CD8-positive, alpha-beta T cell (primary cell): ENCODE measurements at regions of chr3 and their contacts with region 1.

Region 1: DNA sequence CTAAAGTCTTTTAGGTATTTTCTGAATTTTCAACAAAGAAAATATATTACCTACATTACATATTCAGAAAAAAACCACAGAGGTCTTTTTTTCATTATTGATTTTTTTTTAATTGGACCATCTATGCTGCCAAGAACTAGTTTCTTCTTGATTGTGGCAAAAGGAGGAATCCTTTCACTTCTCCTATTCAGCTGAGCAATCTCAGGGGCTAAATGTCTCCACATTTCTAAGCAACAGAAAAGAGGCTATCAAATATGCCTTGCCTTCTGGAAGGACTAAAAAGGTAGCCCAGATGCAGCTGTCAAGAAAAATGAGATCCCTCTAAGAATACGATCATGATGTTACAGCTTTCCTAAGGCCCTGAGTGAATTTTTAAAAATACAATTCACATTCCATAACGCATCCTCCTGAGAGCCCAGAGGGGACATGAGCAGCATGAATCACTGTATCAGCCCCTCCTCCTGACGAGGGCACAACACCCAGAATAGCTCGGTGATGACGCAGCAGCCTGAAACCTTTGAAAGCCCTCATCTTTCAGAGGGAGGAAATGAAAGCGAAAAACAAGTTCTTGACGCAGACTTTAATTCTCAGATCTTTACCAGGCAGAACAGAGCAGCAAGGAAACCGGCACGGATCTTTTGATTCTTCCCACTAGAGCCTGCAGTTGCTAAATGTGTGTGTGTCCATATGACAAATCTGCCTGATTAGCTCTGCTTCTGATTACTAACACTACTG is 24.6 kb downstream of the RUBCN start:
- DNase-seq: peak; percentile 71 to 98 (median 86)
- ATAC-seq: peak; percentile 98
- H3K4me3 ChIP-seq: peak overlapping the region; percentile 29 to 41
- H3K4me3 Mint-ChIP-seq: peak overlapping the region; percentile 75
- H3K27ac ChIP-seq: peak overlapping the region; percentile 59 to 90
- H3K27ac Mint-ChIP-seq: peak overlapping the region; percentile 94
- H3K4me1 ChIP-seq: peaks cover 14% of the 10 kb centered on the region
- H3K4me1 Mint-ChIP-seq: peaks cover 24% of the 10 kb centered on the region
- H3K27me3 ChIP-seq: no peaks in the 10 kb centered on the region
- H3K27me3 Mint-ChIP-seq: no peaks in the 10 kb centered on the region
- CTCF ChIP-seq: no peak

Region 2: GRCh38 chr3:197700095-197700494 is 12.0 kb before region 1 on chr3:
- CTCF ChIA-PET with region 1: no interaction called
- POLR2A ChIA-PET with region 1: interaction called, 11 read pairs
- intact Hi-C with region 1: no loop called
- DNase-seq: no peak
- ATAC-seq: no peak
- H3K4me3 ChIP-seq: no peak overlapping the region
- H3K4me3 Mint-ChIP-seq: no peak overlapping the region
- H3K27ac ChIP-seq: no peak overlapping the region
- H3K27ac Mint-ChIP-seq: no peak overlapping the region
- H3K4me1 ChIP-seq: no peaks in the 10 kb centered on the region
- H3K4me1 Mint-ChIP-seq: no peaks in the 10 kb centered on the region
- H3K27me3 ChIP-seq: no peaks in the 10 kb centered on the region
- H3K27me3 Mint-ChIP-seq: no peaks in the 10 kb centered on the region
- CTCF ChIP-seq: no peak

Region 3: GRCh38 chr3:197749601-197750395 is 37.7 kb after region 1 on chr3 and contains the start of gene FYTTD1:
- CTCF ChIA-PET with region 1: interaction called, 5 read pairs
- POLR2A ChIA-PET with region 1: interaction called, 16 read pairs
- intact Hi-C with region 1: loop called (anchors 1 kb)
- DNase-seq: peak; percentile 72 to 95 (median 89)
- ATAC-seq: peak; percentile 76
- H3K4me3 ChIP-seq: peak within 1 kb of the TSS; percentile 57 to 73
- H3K4me3 Mint-ChIP-seq: peak within 1 kb of the TSS; percentile 96
- H3K27ac ChIP-seq: peak within 1 kb of the TSS; percentile 64 to 79
- H3K27ac Mint-ChIP-seq: peak within 1 kb of the TSS; percentile 98
- H3K4me1 ChIP-seq: peaks cover 33% of the 10 kb centered on the region
- H3K4me1 Mint-ChIP-seq: peaks cover 46% of the 10 kb centered on the region
- H3K27me3 ChIP-seq: no peaks in the 10 kb centered on the region
- H3K27me3 Mint-ChIP-seq: no peaks in the 10 kb centered on the region
- CTCF ChIP-seq: peak; percentile 15
- total RNA-seq, gene FYTTD1: 80.9 to 88.0 TPM

Region 4: GRCh38 chr3:197949754-197950660 is 237.9 kb after region 1 on chr3 and contains the start of gene RPL35A:
- CTCF ChIA-PET with region 1: no interaction called
- POLR2A ChIA-PET with region 1: no interaction called
- intact Hi-C with region 1: loop called in 1 of 2 experiments (anchors 1 kb)
- DNase-seq: peak; percentile 74 to 96 (median 81)
- ATAC-seq: peak; percentile 91
- H3K4me3 ChIP-seq: peak within 1 kb of the TSS; percentile 59 to 85
- H3K4me3 Mint-ChIP-seq: peak within 1 kb of the TSS; percentile 98
- H3K27ac ChIP-seq: peak within 1 kb of the TSS; percentile 91 to 97
- H3K27ac Mint-ChIP-seq: peak within 1 kb of the TSS; percentile 98
- H3K4me1 ChIP-seq: peaks cover 39% of the 10 kb centered on the region
- H3K4me1 Mint-ChIP-seq: peaks cover 43% of the 10 kb centered on the region
- H3K27me3 ChIP-seq: no peaks in the 10 kb centered on the region
- H3K27me3 Mint-ChIP-seq: no peaks in the 10 kb centered on the region
- CTCF ChIP-seq: no peak
- total RNA-seq, gene RPL35A: 2,004 to 2,100 TPM